Mammary epithelial cell (primary cell): ENCODE measurements at regions of chr18 and their contacts with region 1.

Region 1: DNA sequence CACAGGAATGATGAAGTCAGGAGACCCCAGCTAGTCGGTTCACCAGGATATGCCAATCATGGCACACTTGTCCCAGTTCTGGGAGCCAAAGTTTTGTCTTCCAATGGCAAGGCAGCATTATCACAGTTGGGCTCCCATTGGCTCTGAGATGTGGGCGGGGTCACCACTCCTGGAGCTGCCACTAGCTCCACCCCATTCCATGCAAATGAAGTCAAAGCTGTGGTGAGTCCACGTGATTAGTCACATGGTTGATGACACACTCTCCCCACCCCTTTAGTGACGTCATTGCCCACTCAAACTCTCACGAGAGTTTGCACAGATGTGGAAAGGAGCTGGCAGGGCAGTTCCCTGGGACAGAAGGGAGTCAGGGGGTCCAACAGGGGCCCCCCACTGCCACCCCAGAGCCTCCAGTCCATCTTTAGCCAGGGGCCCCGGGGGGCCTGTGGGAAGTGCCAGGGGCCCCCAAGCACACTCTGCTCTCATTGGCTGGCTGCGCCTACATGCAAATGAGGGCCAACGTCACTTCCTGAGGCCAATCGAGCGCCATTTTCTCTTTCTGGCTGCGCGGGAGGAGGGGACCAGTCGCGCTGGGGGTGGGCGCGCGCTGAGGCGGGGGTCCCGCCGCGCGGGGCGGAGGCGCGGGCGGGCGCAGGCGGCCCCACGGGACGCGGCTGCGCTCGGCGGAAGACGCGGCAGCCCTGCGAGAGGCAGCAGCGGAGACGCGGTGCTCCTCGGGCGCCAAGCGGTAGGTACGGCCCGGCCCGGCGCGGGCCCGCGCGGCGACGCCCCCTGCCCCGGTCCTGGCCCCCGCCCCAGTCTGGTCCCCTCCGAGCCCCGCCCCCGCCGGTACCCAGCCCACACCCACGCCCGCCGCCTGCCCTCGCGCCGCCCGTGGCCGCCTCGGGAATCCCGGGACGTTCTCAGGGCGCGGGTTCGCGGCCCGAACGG is at the start of gene ADNP2:
- DNase-seq: peak; percentile 93
- H3K4me3 ChIP-seq: peak within 1 kb of the TSS; percentile 75 to 89 (median 86)
- H3K27ac ChIP-seq: peak within 1 kb of the TSS; percentile 84
- H3K4me1 ChIP-seq: peaks cover 12% of the 10 kb centered on the region
- H3K27me3 ChIP-seq: no peaks in the 10 kb centered on the region
- CTCF ChIP-seq: no peak
- total RNA-seq, gene ADNP2: 21.5 to 27.2 TPM

Region 2: GRCh38 chr18:79679111-79679872 is 429.7 kb before region 1 on chr18 and contains the start of gene CTDP1:
- CTCF ChIA-PET with region 1: no interaction called
- dilution Hi-C with region 1: no loop called
- in situ Hi-C with region 1: no loop called
- intact Hi-C with region 1: loop called (anchors 5 kb)
- DNase-seq: peak; percentile 99
- H3K4me3 ChIP-seq: peak within 1 kb of the TSS; percentile 84 to 98 (median 98)
- H3K27ac ChIP-seq: peak within 1 kb of the TSS; percentile 94
- H3K4me1 ChIP-seq: peaks cover 22% of the 10 kb centered on the region
- H3K27me3 ChIP-seq: no peaks in the 10 kb centered on the region
- CTCF ChIP-seq: no peak
- total RNA-seq, gene CTDP1: 20.7 to 23.5 TPM

Region 3: DNA sequence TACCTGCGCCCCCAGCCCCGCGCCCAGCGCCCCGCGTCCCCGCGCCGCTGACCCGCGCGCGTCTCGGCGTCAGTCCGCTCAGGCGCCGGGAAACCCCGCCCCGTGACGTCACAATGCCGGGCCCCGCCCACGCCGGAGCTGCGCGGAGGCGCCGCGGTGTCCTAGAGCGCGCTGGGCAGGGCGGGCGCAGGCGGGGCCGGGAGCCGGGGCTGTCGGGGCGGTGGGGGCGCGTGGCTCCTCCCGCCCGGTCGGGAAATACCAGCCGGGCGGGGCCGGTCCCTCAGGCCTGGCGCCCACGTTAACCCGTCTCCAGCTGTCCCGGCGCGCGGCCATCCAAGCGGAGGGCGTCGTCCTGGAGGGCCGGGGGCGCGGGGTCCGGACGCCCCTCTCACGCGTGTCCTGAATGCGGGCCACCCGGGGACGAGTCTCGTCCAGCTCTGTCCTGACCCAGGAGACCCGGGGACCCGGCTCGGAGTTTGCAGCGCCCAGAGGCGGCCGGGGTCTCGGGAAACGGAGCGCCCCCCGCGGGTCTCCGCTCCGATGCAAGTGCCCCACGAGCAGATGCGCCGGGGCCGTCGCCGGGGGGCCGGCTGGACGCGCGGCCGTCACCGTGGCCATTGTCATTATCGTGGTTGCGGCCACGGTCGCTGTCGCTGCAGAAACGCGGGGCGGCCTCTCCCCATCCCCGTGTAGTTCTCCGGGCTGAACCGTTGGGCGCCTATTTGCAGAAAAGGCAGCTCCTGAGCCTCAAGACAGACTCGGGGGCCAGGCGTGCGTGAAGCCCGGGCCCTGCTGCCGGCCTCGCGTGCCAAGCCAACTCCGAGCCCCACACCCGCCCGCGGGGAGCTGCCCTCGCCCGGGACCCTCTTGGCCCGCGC is 157.2 kb before region 1 on chr18 and contains the start of gene SLC66A2:
- CTCF ChIA-PET with region 1: no interaction called
- dilution Hi-C with region 1: no loop called
- in situ Hi-C with region 1: no loop called
- intact Hi-C with region 1: no loop called
- DNase-seq: peak; percentile 83
- H3K4me3 ChIP-seq: peak within 1 kb of the TSS; percentile 70 to 76 (median 75)
- H3K27ac ChIP-seq: peak within 1 kb of the TSS; percentile 56
- H3K4me1 ChIP-seq: peaks cover 15% of the 10 kb centered on the region
- H3K27me3 ChIP-seq: no peaks in the 10 kb centered on the region
- CTCF ChIP-seq: no peak
- total RNA-seq, gene SLC66A2: 40.0 to 42.7 TPM

Region 4: GRCh38 chr18:79988451-79989194 is 120.4 kb before region 1 on chr18 and contains the start of gene TXNL4A:
- CTCF ChIA-PET with region 1: no interaction called
- dilution Hi-C with region 1: no loop called
- in situ Hi-C with region 1: no loop called
- intact Hi-C with region 1: loop called (anchors 2 kb)
- DNase-seq: peak; percentile 81
- H3K4me3 ChIP-seq: peak within 1 kb of the TSS; percentile 74 to 99 (median 98)
- H3K27ac ChIP-seq: peak within 1 kb of the TSS; percentile 71
- H3K4me1 ChIP-seq: peaks cover 10% of the 10 kb centered on the region
- H3K27me3 ChIP-seq: no peaks in the 10 kb centered on the region
- CTCF ChIP-seq: no peak
- total RNA-seq, gene TXNL4A: 32.8 to 100 TPM

Region 5: GRCh38 chr18:80034068-80034851 is 74.7 kb before region 1 on chr18 and contains the start of gene RBFA:
- CTCF ChIA-PET with region 1: no interaction called
- dilution Hi-C with region 1: no loop called
- in situ Hi-C with region 1: no loop called
- intact Hi-C with region 1: loop called (anchors 2 kb)
- DNase-seq: peak; percentile 97
- H3K4me3 ChIP-seq: peak within 1 kb of the TSS; percentile 67 to 97 (median 90)
- H3K27ac ChIP-seq: peak within 1 kb of the TSS; percentile 84
- H3K4me1 ChIP-seq: peaks cover 4% of the 10 kb centered on the region
- H3K27me3 ChIP-seq: no peaks in the 10 kb centered on the region
- CTCF ChIP-seq: peak in 1 of 2 donors; percentile 57
- total RNA-seq, gene RBFA: 29.3 to 35.1 TPM

Region 6: DNA sequence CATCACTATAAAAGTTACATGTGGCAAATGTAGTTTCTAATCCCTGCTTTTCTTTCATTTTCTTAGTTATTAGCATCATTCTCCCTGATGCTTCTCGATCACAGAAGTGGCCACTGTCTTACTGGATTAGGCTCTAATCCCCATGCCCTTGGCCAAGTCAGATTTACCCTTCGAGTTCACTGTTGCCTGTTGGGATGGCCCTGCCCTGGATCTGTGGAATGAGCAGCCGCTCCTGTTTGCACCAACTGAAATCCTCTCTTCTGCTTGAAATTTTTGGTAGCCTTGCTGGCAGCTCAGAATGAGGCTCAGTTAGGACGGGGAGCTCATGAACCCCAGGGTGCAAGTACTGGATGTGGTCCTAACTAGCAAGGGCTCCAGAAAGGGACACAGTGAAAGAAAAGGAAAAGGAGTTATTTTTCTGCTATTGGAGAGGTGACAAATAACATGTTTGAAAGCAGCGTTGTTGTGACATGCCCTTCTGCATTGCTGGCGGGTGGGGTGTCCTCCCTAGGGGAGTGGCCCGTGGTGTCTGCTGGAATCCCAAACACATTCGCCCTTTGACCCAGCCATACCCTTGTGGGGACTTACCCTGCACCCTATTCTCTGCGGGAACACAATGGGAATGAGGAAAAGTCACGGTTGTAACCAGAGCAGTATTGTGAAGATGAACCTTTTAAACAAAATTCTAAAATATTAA is 40.3 kb before region 1 on chr18:
- CTCF ChIA-PET with region 1: no interaction called
- dilution Hi-C with region 1: loop called (anchors 5 kb)
- in situ Hi-C with region 1: no loop called
- intact Hi-C with region 1: no loop called
- DNase-seq: no peak
- H3K4me3 ChIP-seq: no peak overlapping the region
- H3K27ac ChIP-seq: no peak overlapping the region
- H3K4me1 ChIP-seq: no peaks in the 10 kb centered on the region
- H3K27me3 ChIP-seq: no peaks in the 10 kb centered on the region
- CTCF ChIP-seq: no peak

Region 7: GRCh38 chr18:80124131-80124530 is 15.1 kb after region 1 on chr18:
- CTCF ChIA-PET with region 1: no interaction called
- dilution Hi-C with region 1: no loop called
- in situ Hi-C with region 1: no loop called
- intact Hi-C with region 1: loop called (anchors 2 kb)
- DNase-seq: peak; percentile 54
- H3K4me3 ChIP-seq: no peak overlapping the region
- H3K27ac ChIP-seq: no peak overlapping the region
- H3K4me1 ChIP-seq: peaks cover 9% of the 10 kb centered on the region
- H3K27me3 ChIP-seq: no peaks in the 10 kb centered on the region
- CTCF ChIP-seq: no peak

Region 8: GRCh38 chr18:80147418-80148325 is 38.7 kb after region 1 on chr18:
- CTCF ChIA-PET with region 1: no interaction called
- dilution Hi-C with region 1: loop called (anchors 5 kb)
- in situ Hi-C with region 1: no loop called
- intact Hi-C with region 1: loop called (anchors 2 kb)
- DNase-seq: peak; percentile 86
- H3K4me3 ChIP-seq: peak overlapping the region; percentile 68 to 78 (median 72)
- H3K27ac ChIP-seq: peak overlapping the region; percentile 67
- H3K4me1 ChIP-seq: peaks cover 15% of the 10 kb centered on the region
- H3K27me3 ChIP-seq: no peaks in the 10 kb centered on the region
- CTCF ChIP-seq: no peak